ENCODE measurements at regions of chr5 and their contacts with region 1.

Region 1: DNA sequence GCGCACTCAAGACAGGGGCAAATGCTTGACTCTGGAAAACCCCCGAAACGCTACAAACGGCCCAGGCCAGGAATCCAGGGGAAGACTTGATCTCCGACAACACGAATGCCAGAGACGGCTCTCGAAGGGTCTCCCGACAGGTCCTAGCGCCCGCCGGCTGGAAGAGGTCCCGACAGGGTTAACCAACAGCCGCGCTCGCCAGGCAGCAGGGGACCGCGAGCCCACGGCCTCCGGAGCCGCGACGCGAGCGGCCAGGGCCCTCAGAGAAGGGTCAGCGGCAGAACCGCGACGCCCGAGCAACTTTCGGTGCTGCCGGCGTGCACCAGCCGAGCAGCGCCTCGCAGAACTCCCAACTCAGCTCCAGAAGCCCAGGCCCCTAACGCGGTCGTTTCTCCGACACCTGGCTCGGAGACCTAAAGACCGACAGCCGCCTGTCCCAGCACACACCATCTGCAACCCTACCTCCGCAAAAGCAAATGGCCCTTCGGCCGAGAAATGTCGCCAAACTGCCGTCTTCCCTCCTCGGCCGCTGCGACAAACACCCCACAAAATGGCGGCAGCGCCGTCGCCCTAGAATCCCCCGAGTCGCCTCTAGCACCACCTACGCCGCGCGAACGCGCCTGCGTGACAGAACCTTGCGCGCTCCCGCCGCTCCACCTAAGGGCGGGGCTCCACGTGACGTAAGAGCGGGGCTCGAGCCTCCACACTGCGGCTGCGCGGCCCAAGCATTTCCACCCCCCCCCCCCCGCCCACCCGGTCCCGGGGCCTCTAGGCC is at the start of gene CLK4:
- DNase-seq: peak; percentile 92
- H3K4me3 ChIP-seq: peak within 1 kb of the TSS; percentile 90 to 97 (median 93)
- H3K27ac ChIP-seq: peak within 1 kb of the TSS; percentile 61
- H3K4me1 ChIP-seq: peaks cover 9% of the 10 kb centered on the region
- H3K27me3 ChIP-seq: no peaks in the 10 kb centered on the region
- CTCF ChIP-seq: no peak
- POLR2A ChIP-seq: peak; percentile 91
- total RNA-seq, gene CLK4: 19.2 and 19.5 TPM in 2 replicates

Region 2: GRCh38 chr5:178279725-178280438 is 346.8 kb before region 1 on chr5:
- CTCF ChIA-PET with region 1: no interaction called
- POLR2A ChIA-PET with region 1: no interaction called
- dilution Hi-C with region 1: no loop called
- intact Hi-C with region 1: loop called (anchors 1 kb)
- DNase-seq: peak; percentile 70
- H3K4me3 ChIP-seq: no peak overlapping the region
- H3K27ac ChIP-seq: no peak overlapping the region
- H3K4me1 ChIP-seq: no peaks in the 10 kb centered on the region
- H3K27me3 ChIP-seq: no peaks in the 10 kb centered on the region
- CTCF ChIP-seq: peak; percentile 94 to 97
- POLR2A ChIP-seq: no peak

Region 3: DNA sequence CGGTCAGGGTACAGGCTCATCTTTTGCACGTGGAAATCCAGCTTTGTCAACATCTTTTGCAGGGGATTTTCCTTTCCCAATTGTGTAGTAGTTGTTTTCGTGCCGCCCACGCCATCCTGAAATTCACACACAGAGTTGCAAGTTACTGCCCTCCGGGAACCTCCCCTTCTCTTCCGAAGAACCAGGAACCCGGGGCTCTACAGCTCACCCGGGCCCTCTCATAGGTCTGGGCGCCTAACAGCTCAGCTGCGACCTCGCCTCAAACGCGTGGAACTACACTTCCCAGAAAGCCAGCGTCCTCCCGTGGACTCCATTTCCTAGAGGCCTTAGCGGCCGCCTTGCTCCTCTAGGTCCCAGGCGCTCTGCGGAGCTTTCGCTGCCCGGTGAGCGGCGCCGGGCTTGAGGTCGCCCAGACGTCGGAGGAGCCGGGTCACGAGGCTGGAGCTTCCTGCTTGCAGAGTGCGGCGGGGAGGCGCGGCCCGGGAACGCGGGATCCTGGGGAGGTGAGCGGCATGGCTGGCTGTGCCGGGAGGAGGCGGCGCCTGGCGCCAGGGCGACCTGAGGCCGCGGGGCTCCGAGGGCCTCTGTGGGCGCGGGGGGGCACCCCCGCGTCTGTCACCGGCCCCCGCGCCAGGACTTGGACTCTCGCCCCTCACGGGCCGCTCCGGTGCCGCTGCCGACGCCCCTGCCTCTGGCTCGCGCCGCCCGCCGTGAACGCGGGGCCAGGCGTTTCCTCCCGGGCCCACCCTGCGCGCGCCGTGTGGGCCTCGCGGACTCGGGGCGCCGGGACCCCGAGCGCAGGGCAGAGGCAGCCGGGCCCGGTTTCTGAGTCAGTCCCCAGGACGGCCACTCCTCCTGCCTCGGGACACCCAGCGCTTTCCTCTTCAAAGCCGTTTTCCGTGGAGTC is 233.2 kb after region 1 on chr5 and contains the start of gene ZNF354B:
- CTCF ChIA-PET with region 1: no interaction called
- POLR2A ChIA-PET with region 1: no interaction called
- dilution Hi-C with region 1: no loop called
- intact Hi-C with region 1: loop called (anchors 2 kb)
- DNase-seq: peak; percentile 98
- H3K4me3 ChIP-seq: peak within 1 kb of the TSS; percentile 22 to 78 (median 38)
- H3K27ac ChIP-seq: peak within 1 kb of the TSS; percentile 53
- H3K4me1 ChIP-seq: no peaks in the 10 kb centered on the region
- H3K27me3 ChIP-seq: no peaks in the 10 kb centered on the region
- CTCF ChIP-seq: no peak
- POLR2A ChIP-seq: peak; percentile 63
- total RNA-seq, gene ZNF354B: 16.3 and 17.6 TPM in 2 replicates

Region 4: GRCh38 chr5:179080724-179081123 is 454.1 kb after region 1 on chr5:
- CTCF ChIA-PET with region 1: no interaction called
- POLR2A ChIA-PET with region 1: no interaction called
- dilution Hi-C with region 1: no loop called
- intact Hi-C with region 1: loop called (anchors 5 kb)
- DNase-seq: no peak
- H3K4me3 ChIP-seq: no peak overlapping the region
- H3K27ac ChIP-seq: no peak overlapping the region
- H3K4me1 ChIP-seq: no peaks in the 10 kb centered on the region
- H3K27me3 ChIP-seq: no peaks in the 10 kb centered on the region
- CTCF ChIP-seq: no peak
- POLR2A ChIP-seq: no peak

Region 5: GRCh38 chr5:179550511-179551230 is 924.0 kb after region 1 on chr5 and contains the start of gene RUFY1:
- CTCF ChIA-PET with region 1: no interaction called
- POLR2A ChIA-PET with region 1: no interaction called
- dilution Hi-C with region 1: no loop called
- intact Hi-C with region 1: loop called (anchors 5 kb)
- DNase-seq: peak; percentile 85
- H3K4me3 ChIP-seq: peak within 1 kb of the TSS; percentile 71 to 89 (median 79)
- H3K27ac ChIP-seq: peak within 1 kb of the TSS; percentile 80
- H3K4me1 ChIP-seq: peaks cover 19% of the 10 kb centered on the region
- H3K27me3 ChIP-seq: no peaks in the 10 kb centered on the region
- CTCF ChIP-seq: no peak
- POLR2A ChIP-seq: peak; percentile 69
- total RNA-seq, gene RUFY1: 43.3 and 44.9 TPM in 2 replicates